ENCODE measurements at regions of chr1 and their contacts with region 1.

Region 1: DNA sequence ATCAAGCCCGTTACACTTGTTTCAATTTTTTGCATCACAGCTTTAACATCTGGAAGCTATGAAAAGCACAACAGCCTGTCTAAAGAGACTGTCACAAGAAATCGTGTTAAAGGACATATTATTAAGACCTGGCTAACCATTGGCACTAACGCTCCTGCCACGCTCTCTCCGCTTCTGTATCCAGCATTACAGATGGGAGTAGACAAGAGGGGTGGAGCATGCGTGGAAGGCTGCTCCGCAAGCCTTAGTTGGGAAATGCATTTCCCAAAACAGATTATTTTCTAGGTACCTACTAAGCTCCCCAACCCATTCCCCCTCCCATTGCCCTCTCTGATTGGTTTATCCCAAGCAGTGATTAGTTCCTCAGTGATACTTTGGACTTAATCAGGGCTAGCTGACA is 72.4 kb downstream of the NTNG1 start:
- DNase-seq: no peak
- CTCF ChIP-seq: no peak

Region 2: GRCh38 chr1:107196973-107197562 is 16.2 kb before region 1 on chr1:
- CTCF ChIA-PET with region 1: interaction called, 15 read pairs
- POLR2A ChIA-PET with region 1: no interaction called
- DNase-seq: no peak
- CTCF ChIP-seq: peak; percentile 25

Region 3: GRCh38 chr1:107228704-107229371 is 15.6 kb after region 1 on chr1:
- CTCF ChIA-PET with region 1: interaction called, 10 read pairs
- POLR2A ChIA-PET with region 1: no interaction called
- DNase-seq: no peak
- CTCF ChIP-seq: no peak

Measured in GM10248 (cell line).